CD8-positive, alpha-beta T cell (primary cell): ENCODE measurements at regions of chr10 and their contacts with region 1.

Region 1: DNA sequence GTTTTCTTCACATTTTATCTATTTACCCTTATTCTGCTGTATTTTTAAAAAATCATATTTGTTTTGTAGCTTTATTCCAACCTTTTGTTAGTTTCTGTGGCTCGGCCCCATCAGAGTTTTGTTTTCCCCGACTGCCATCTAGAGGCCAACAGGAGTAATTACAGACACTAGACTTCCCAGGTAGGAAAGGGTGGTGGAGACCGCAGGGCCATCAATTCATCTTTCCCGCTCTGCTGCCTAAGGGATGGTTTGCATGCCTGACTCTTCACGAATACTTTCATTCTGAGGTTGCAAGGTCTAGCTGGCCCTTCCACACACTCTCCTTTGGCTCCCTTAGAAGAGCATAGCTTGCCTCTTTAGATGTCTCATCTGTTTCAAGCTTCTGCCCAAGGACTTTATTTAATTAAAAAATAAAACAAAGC is 38.3 kb downstream of the LYZL2 start:
- DNase-seq: peak in 6 of 9 experiments; percentile 23 to 78 (median 57)
- ATAC-seq: peak; percentile 85
- H3K4me3 ChIP-seq: no peak overlapping the region
- H3K4me3 Mint-ChIP-seq: no peak overlapping the region
- H3K27ac ChIP-seq: no peak overlapping the region
- H3K27ac Mint-ChIP-seq: no peak overlapping the region
- H3K4me1 ChIP-seq: no peaks in the 10 kb centered on the region
- H3K4me1 Mint-ChIP-seq: no peaks in the 10 kb centered on the region
- H3K27me3 ChIP-seq: no peaks in the 10 kb centered on the region
- H3K27me3 Mint-ChIP-seq: peaks cover 16% of the 10 kb centered on the region
- CTCF ChIP-seq: peak; percentile 84

Region 2: GRCh38 chr10:29189256-29189655 is 1402.0 kb before region 1 on chr10:
- CTCF ChIA-PET with region 1: no interaction called
- POLR2A ChIA-PET with region 1: no interaction called
- intact Hi-C with region 1: no loop called
- DNase-seq: no peak
- ATAC-seq: no peak
- H3K4me3 ChIP-seq: no peak overlapping the region
- H3K4me3 Mint-ChIP-seq: no peak overlapping the region
- H3K27ac ChIP-seq: no peak overlapping the region
- H3K27ac Mint-ChIP-seq: no peak overlapping the region
- H3K4me1 ChIP-seq: no peaks in the 10 kb centered on the region
- H3K4me1 Mint-ChIP-seq: no peaks in the 10 kb centered on the region
- H3K27me3 ChIP-seq: no peaks in the 10 kb centered on the region
- H3K27me3 Mint-ChIP-seq: peaks cover 13% of the 10 kb centered on the region
- CTCF ChIP-seq: no peak

Region 3: DNA sequence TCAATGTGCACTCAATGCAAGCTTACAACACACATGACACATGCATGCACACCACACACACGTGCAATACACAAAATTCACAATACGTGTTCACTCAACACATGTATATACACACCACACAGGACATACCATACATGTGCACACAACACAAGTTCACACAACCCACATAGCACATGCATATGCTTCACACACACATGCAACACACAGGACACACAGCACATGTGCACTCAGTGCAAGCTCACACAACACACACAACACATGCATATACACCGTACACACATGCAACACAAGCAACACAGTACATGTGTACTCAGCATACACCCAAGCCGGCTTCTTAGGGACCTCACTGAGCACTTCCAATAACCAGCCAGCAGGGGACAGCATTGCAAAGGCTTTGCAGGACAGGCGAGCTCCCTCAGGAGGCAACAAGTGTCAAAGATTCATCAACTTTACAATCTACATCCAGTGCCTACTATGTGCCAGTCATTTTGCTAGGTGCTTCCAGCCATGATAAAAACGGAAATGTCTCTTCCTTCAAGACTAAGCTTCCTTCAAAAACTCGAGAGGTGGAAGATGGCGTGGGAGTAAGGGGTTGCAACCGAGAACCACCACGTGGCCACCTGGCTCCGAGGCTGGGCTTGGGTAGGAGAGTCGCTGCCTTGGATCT is 593.0 kb before region 1 on chr10:
- CTCF ChIA-PET with region 1: interaction called, 14 read pairs
- POLR2A ChIA-PET with region 1: no interaction called
- intact Hi-C with region 1: loop called (anchors 1 to 2 kb)
- DNase-seq: peak; percentile 57 to 86 (median 77)
- ATAC-seq: peak; percentile 95
- H3K4me3 ChIP-seq: no peak overlapping the region
- H3K4me3 Mint-ChIP-seq: no peak overlapping the region
- H3K27ac ChIP-seq: no peak overlapping the region
- H3K27ac Mint-ChIP-seq: no peak overlapping the region
- H3K4me1 ChIP-seq: no peaks in the 10 kb centered on the region
- H3K4me1 Mint-ChIP-seq: peaks cover 5% of the 10 kb centered on the region
- H3K27me3 ChIP-seq: peaks cover 8% of the 10 kb centered on the region in 2 experiments
- H3K27me3 Mint-ChIP-seq: peaks cover 49% of the 10 kb centered on the region
- CTCF ChIP-seq: peak; percentile 99

Region 4: GRCh38 chr10:30368065-30368718 is 223.1 kb before region 1 on chr10:
- CTCF ChIA-PET with region 1: interaction called, 10 read pairs
- POLR2A ChIA-PET with region 1: no interaction called
- intact Hi-C with region 1: no loop called
- DNase-seq: peak in 1 of 9 experiments; percentile 40
- ATAC-seq: no peak
- H3K4me3 ChIP-seq: no peak overlapping the region
- H3K4me3 Mint-ChIP-seq: no peak overlapping the region
- H3K27ac ChIP-seq: no peak overlapping the region
- H3K27ac Mint-ChIP-seq: no peak overlapping the region
- H3K4me1 ChIP-seq: peaks cover 10% of the 10 kb centered on the region
- H3K4me1 Mint-ChIP-seq: peaks cover 2% of the 10 kb centered on the region
- H3K27me3 ChIP-seq: no peaks in the 10 kb centered on the region
- H3K27me3 Mint-ChIP-seq: peaks cover 7% of the 10 kb centered on the region
- CTCF ChIP-seq: no peak

Region 5: GRCh38 chr10:30392564-30392990 is 198.7 kb before region 1 on chr10:
- CTCF ChIA-PET with region 1: interaction called, 220 read pairs
- POLR2A ChIA-PET with region 1: interaction called, 3 read pairs
- intact Hi-C with region 1: loop called (anchors 1 kb)
- DNase-seq: peak; percentile 53 to 85 (median 76)
- ATAC-seq: peak; percentile 100
- H3K4me3 ChIP-seq: no peak overlapping the region
- H3K4me3 Mint-ChIP-seq: no peak overlapping the region
- H3K27ac ChIP-seq: no peak overlapping the region
- H3K27ac Mint-ChIP-seq: no peak overlapping the region
- H3K4me1 ChIP-seq: peaks cover 7% of the 10 kb centered on the region
- H3K4me1 Mint-ChIP-seq: peaks cover 3% of the 10 kb centered on the region
- H3K27me3 ChIP-seq: peaks cover 0 to 3% of the 10 kb centered on the region in 2 experiments
- H3K27me3 Mint-ChIP-seq: peaks cover 12% of the 10 kb centered on the region
- CTCF ChIP-seq: peak; percentile 88

Region 6: DNA sequence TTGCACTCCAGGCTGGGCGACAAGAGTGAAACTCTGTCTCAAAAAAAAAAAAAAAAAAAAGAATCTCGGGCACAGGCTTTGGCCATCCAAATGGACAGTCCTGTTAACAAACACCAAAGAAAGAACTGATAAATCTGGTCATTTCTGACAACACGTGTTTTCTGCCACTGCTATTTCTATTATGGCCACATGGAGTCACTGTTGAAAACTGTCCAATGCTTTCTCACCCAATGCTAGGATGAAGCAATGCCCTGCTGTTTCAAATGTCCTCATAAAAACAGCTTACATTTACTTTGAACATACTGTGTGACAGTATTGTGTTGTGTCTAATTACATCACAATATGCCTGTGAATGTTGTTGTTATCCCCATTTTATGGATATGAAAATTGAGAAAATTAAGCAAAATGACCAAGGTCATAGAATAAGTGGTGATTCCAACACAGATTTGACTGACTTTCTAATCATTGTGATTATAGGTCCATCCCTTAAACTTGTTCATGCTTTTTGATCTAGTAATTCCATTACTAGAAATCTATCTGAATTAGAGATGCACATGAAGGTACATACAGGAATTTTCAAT is 177.2 kb before region 1 on chr10:
- CTCF ChIA-PET with region 1: interaction called, 15 read pairs
- POLR2A ChIA-PET with region 1: no interaction called
- intact Hi-C with region 1: loop called (anchors 1 to 2 kb)
- DNase-seq: peak in 2 of 9 experiments; percentile 66 to 78
- ATAC-seq: peak; percentile 73
- H3K4me3 ChIP-seq: no peak overlapping the region
- H3K4me3 Mint-ChIP-seq: no peak overlapping the region
- H3K27ac ChIP-seq: no peak overlapping the region
- H3K27ac Mint-ChIP-seq: no peak overlapping the region
- H3K4me1 ChIP-seq: peaks cover 10% of the 10 kb centered on the region
- H3K4me1 Mint-ChIP-seq: peaks cover 9% of the 10 kb centered on the region
- H3K27me3 ChIP-seq: no peaks in the 10 kb centered on the region
- H3K27me3 Mint-ChIP-seq: no peaks in the 10 kb centered on the region
- CTCF ChIP-seq: peak; percentile 66

Region 7: GRCh38 chr10:30606313-30606712 is 15.1 kb after region 1 on chr10:
- CTCF ChIA-PET with region 1: interaction called, 17 read pairs
- POLR2A ChIA-PET with region 1: no interaction called
- intact Hi-C with region 1: no loop called
- DNase-seq: no peak
- ATAC-seq: no peak
- H3K4me3 ChIP-seq: no peak overlapping the region
- H3K4me3 Mint-ChIP-seq: no peak overlapping the region
- H3K27ac ChIP-seq: no peak overlapping the region
- H3K27ac Mint-ChIP-seq: no peak overlapping the region
- H3K4me1 ChIP-seq: no peaks in the 10 kb centered on the region
- H3K4me1 Mint-ChIP-seq: no peaks in the 10 kb centered on the region
- H3K27me3 ChIP-seq: no peaks in the 10 kb centered on the region
- H3K27me3 Mint-ChIP-seq: peaks cover 25% of the 10 kb centered on the region
- CTCF ChIP-seq: no peak

Region 8: DNA sequence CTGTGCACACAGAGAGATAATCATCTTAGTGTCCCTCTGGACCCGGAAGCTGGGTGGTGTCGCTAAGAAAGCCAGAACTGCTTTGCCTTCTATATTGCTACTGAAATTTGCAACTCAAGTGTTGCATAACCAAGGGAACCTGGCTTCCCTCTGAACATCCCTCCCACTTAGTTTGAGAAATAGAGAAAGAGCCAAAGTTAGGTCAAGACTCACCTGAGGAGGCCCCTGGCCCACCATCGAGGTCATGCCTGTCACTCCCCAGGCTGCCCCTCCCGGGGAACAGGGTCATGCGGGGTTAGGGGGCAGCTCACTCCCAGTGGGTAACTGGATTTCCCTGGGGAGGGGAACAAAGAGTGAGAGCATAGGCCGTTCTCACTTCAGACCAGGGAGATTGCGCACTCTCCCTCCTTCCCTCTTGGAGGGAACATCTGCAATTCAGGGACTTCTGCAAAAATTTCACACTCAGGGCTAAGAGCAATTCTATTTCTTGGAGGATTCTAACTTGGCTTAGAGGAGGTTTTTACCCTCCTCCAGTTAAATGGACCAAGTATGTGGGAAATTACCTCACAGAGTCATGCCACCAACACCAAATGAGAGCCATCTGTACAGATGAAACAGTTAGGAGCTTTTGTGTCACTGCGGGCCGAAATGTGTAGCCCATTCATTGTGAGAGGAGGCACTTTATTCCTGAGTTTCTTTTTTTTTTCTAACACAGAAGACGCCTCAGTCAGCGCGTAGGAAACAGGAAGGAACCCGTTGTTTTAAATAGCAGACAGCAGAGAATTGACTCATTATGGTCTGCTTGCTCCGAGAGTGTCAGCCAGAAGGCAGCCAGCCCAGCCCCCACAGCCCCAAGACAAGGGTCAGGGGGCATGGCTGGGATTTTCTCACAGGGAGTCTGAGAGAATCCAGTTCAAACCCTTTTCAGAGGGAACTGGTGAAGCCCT is 1116.1 kb after region 1 on chr10:
- CTCF ChIA-PET with region 1: no interaction called
- POLR2A ChIA-PET with region 1: no interaction called
- intact Hi-C with region 1: no loop called
- DNase-seq: peak in 3 of 9 experiments; percentile 7 to 32 (median 9)
- ATAC-seq: peak; percentile 44
- H3K4me3 ChIP-seq: no peak overlapping the region
- H3K4me3 Mint-ChIP-seq: peak overlapping the region; percentile 38
- H3K27ac ChIP-seq: no peak overlapping the region
- H3K27ac Mint-ChIP-seq: no peak overlapping the region
- H3K4me1 ChIP-seq: peaks cover 7% of the 10 kb centered on the region
- H3K4me1 Mint-ChIP-seq: peaks cover 12% of the 10 kb centered on the region
- H3K27me3 ChIP-seq: no peaks in the 10 kb centered on the region
- H3K27me3 Mint-ChIP-seq: no peaks in the 10 kb centered on the region
- CTCF ChIP-seq: no peak